Esophagus squamous epithelium (tissue), 5 donors: ENCODE measurements at regions of chr16 and their contacts with region 1.

Region 1: GRCh38 chr16:2023098-2023925 is 3.4 kb upstream of the NHERF2 start:
- DNase-seq: peak; percentile 39
- H3K4me3 ChIP-seq: peak overlapping the region in 3 of 4 donors; percentile 31 to 61 (median 32)
- H3K27ac ChIP-seq: peak overlapping the region; percentile 29 to 85 (median 78)
- H3K4me1 ChIP-seq: peaks cover 36 to 73% (median 47%) of the 10 kb centered on the region in 3 donors
- H3K27me3 ChIP-seq: peaks cover 3 to 51% (median 11%) of the 10 kb centered on the region in 4 donors
- CTCF ChIP-seq: peak; percentile 96 to 100 (median 99)
- POLR2A ChIP-seq: peak in 1 of 4 donors; percentile 28

Region 2: GRCh38 chr16:2142942-2143877 is 119.9 kb after region 1 on chr16:
- intact Hi-C with region 1: loop called (anchors 5 kb)
- DNase-seq: no peak
- H3K4me3 ChIP-seq: no peak overlapping the region
- H3K27ac ChIP-seq: no peak overlapping the region
- H3K4me1 ChIP-seq: peaks cover 15 to 23% (median 15%) of the 10 kb centered on the region in 3 donors
- H3K27me3 ChIP-seq: no peaks in the 10 kb centered on the region
- CTCF ChIP-seq: no peak
- POLR2A ChIP-seq: no peak